ENCODE measurements at regions of chr15 and their contacts with region 1.

Region 1: GRCh38 chr15:99565299-99566156 is at the start of gene MEF2A:
- DNase-seq: peak; percentile 89
- H3K4me3 Mint-ChIP-seq: peak within 1 kb of the TSS; percentile 98
- H3K27ac Mint-ChIP-seq: peak within 1 kb of the TSS; percentile 95
- H3K4me1 Mint-ChIP-seq: peaks cover 36% of the 10 kb centered on the region
- H3K27me3 Mint-ChIP-seq: peaks cover 4% of the 10 kb centered on the region
- total RNA-seq, gene MEF2A: 27.4 and 30.2 TPM in 2 replicates

Region 2: GRCh38 chr15:99250494-99251435 is 314.8 kb before region 1 on chr15:
- intact Hi-C with region 1: loop called (anchors 1 kb)
- DNase-seq: peak; percentile 96
- H3K4me3 Mint-ChIP-seq: peak overlapping the region; percentile 89
- H3K27ac Mint-ChIP-seq: peak overlapping the region; percentile 82
- H3K4me1 Mint-ChIP-seq: peaks cover 31% of the 10 kb centered on the region
- H3K27me3 Mint-ChIP-seq: no peaks in the 10 kb centered on the region

Region 3: GRCh38 chr15:99371180-99372103 is 194.1 kb before region 1 on chr15:
- intact Hi-C with region 1: loop called (anchors 1 kb)
- DNase-seq: no peak
- H3K4me3 Mint-ChIP-seq: peak overlapping the region; percentile 20
- H3K27ac Mint-ChIP-seq: peak overlapping the region; percentile 69
- H3K4me1 Mint-ChIP-seq: peaks cover 29% of the 10 kb centered on the region
- H3K27me3 Mint-ChIP-seq: no peaks in the 10 kb centered on the region

Region 4: GRCh38 chr15:99442252-99442897 is 123.2 kb before region 1 on chr15:
- intact Hi-C with region 1: loop called (anchors 5 kb)
- DNase-seq: no peak
- H3K4me3 Mint-ChIP-seq: no peak overlapping the region
- H3K27ac Mint-ChIP-seq: peak overlapping the region; percentile 74
- H3K4me1 Mint-ChIP-seq: peaks cover 42% of the 10 kb centered on the region
- H3K27me3 Mint-ChIP-seq: peaks cover 15% of the 10 kb centered on the region

Region 5: DNA sequence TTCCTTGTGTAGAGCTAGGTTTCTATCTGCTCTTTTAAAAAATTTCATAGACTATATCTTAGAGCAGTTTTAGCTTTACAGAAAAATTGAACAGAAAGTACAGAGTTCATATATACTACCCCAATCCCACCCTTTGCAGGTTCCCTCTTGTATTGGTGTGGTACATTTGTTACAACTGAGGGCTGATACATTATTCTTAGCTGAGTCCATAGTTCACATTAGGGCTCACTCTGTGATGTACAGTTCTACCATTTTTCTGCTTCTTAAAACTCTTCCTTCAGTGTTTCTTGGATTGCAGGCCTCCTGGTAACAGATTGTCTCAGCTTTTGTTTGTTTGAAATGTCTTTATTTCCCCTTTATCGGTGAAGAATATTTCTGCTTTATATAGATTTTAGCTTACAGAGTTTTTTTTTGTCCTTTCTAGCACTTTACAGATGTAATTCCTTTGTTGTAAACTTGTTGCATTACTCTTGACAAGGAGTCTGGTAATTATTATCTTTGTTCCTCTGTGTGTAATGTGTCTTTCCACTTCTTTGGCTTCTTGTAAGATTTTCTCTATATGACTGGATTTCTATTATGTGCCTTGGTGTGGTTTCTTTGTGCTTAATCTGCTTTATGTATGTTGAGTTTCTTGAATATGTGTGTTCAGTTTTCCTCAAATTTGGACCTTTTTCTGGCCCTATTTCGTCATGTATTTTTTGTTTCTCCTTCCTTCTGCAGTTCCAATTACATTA is 25.6 kb after region 1 on chr15:
- intact Hi-C with region 1: loop called (anchors 1 kb)
- DNase-seq: no peak
- H3K4me3 Mint-ChIP-seq: no peak overlapping the region
- H3K27ac Mint-ChIP-seq: peak overlapping the region; percentile 59
- H3K4me1 Mint-ChIP-seq: peaks cover 31% of the 10 kb centered on the region
- H3K27me3 Mint-ChIP-seq: peaks cover 1% of the 10 kb centered on the region

Region 6: GRCh38 chr15:99733268-99734039 is 167.9 kb after region 1 on chr15 and contains the start of gene LYSMD4:
- intact Hi-C with region 1: loop called (anchors 1 kb)
- DNase-seq: peak; percentile 97
- H3K4me3 Mint-ChIP-seq: peak within 1 kb of the TSS; percentile 86
- H3K27ac Mint-ChIP-seq: peak within 1 kb of the TSS; percentile 88
- H3K4me1 Mint-ChIP-seq: peaks cover 34% of the 10 kb centered on the region
- H3K27me3 Mint-ChIP-seq: no peaks in the 10 kb centered on the region
- total RNA-seq, gene LYSMD4: 10.1 and 10.3 TPM in 2 replicates

Measured in activated T-helper 1 cell treated with anti-CD3 and anti-CD28 coated beads, Interleukin-12 subunit alpha, Interleukin-12 subunit beta, Interleukin-2, Interleukin-4 antibody, amounts not matched to agents 30 ng/mL and 10 ng/mL and 1 ng/mL, durations not matched to agents 14 hours and 24 hours and 36 hours (primary cell).